Activated naive CD4-positive, alpha-beta T cell treated with anti-CD3 and anti-CD28 coated beads for 36 hours (primary cell): ENCODE measurements at regions of chr14 and their contacts with region 1.

Region 1: GRCh38 chr14:103910262-103910935 is 17.9 kb upstream of the TDRD9 start:
- DNase-seq: peak; percentile 87
- H3K4me3 Mint-ChIP-seq: peak overlapping the region; percentile 25
- H3K27ac Mint-ChIP-seq: peak overlapping the region; percentile 84
- H3K4me1 Mint-ChIP-seq: peaks cover 24% of the 10 kb centered on the region
- H3K27me3 Mint-ChIP-seq: no peaks in the 10 kb centered on the region

Region 2: GRCh38 chr14:102555264-102555831 is 1355.1 kb before region 1 on chr14:
- CTCF ChIA-PET with region 1: no interaction called
- intact Hi-C with region 1: no loop called
- DNase-seq: peak; percentile 56
- H3K4me3 Mint-ChIP-seq: peak overlapping the region; percentile 52
- H3K27ac Mint-ChIP-seq: no peak overlapping the region
- H3K4me1 Mint-ChIP-seq: no peaks in the 10 kb centered on the region
- H3K27me3 Mint-ChIP-seq: no peaks in the 10 kb centered on the region

Region 3: GRCh38 chr14:103463149-103463548 is 447.2 kb before region 1 on chr14:
- CTCF ChIA-PET with region 1: no interaction called
- intact Hi-C with region 1: no loop called
- DNase-seq: no peak
- H3K4me3 Mint-ChIP-seq: no peak overlapping the region
- H3K27ac Mint-ChIP-seq: no peak overlapping the region
- H3K4me1 Mint-ChIP-seq: peaks cover 10% of the 10 kb centered on the region
- H3K27me3 Mint-ChIP-seq: no peaks in the 10 kb centered on the region

Region 4: GRCh38 chr14:103576371-103577024 is 333.9 kb before region 1 on chr14:
- CTCF ChIA-PET with region 1: no interaction called
- intact Hi-C with region 1: loop called (anchors 5 kb)
- DNase-seq: no peak
- H3K4me3 Mint-ChIP-seq: no peak overlapping the region
- H3K27ac Mint-ChIP-seq: peak overlapping the region; percentile 52
- H3K4me1 Mint-ChIP-seq: no peaks in the 10 kb centered on the region
- H3K27me3 Mint-ChIP-seq: no peaks in the 10 kb centered on the region

Region 5: GRCh38 chr14:103871596-103872480 is 38.6 kb before region 1 on chr14:
- CTCF ChIA-PET with region 1: no interaction called
- intact Hi-C with region 1: loop called (anchors 2 kb)
- DNase-seq: peak; percentile 77
- H3K4me3 Mint-ChIP-seq: peak overlapping the region; percentile 77
- H3K27ac Mint-ChIP-seq: peak overlapping the region; percentile 54
- H3K4me1 Mint-ChIP-seq: peaks cover 8% of the 10 kb centered on the region
- H3K27me3 Mint-ChIP-seq: no peaks in the 10 kb centered on the region

Region 6: DNA sequence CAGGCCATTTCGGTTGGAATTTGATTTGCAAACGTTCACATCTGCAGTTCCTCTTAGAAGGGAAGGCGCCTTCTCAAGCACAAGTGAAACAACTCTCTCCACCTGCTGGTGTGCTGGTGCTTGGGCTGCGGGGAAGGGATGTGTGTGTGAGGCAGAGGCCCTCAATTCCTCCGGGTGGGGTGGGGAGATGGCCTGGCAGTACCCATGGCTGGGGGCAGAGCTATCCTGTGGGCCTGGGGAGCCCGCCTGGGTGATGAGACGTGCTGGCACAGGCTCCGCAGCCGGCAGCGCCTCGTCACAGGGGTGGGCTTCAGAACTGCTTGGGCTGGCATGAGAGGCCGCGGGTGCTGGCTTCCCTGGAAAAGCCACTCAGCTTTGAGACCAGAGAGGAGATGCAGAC is 11.1 kb before region 1 on chr14:
- CTCF ChIA-PET with region 1: interaction called, 21 read pairs
- intact Hi-C with region 1: no loop called
- DNase-seq: no peak
- H3K4me3 Mint-ChIP-seq: no peak overlapping the region
- H3K27ac Mint-ChIP-seq: no peak overlapping the region
- H3K4me1 Mint-ChIP-seq: peaks cover 2% of the 10 kb centered on the region
- H3K27me3 Mint-ChIP-seq: no peaks in the 10 kb centered on the region